Dorsolateral prefrontal cortex (tissue), 120 donors: ENCODE measurements at regions of chr21 and their contacts with region 1.

Region 1: DNA sequence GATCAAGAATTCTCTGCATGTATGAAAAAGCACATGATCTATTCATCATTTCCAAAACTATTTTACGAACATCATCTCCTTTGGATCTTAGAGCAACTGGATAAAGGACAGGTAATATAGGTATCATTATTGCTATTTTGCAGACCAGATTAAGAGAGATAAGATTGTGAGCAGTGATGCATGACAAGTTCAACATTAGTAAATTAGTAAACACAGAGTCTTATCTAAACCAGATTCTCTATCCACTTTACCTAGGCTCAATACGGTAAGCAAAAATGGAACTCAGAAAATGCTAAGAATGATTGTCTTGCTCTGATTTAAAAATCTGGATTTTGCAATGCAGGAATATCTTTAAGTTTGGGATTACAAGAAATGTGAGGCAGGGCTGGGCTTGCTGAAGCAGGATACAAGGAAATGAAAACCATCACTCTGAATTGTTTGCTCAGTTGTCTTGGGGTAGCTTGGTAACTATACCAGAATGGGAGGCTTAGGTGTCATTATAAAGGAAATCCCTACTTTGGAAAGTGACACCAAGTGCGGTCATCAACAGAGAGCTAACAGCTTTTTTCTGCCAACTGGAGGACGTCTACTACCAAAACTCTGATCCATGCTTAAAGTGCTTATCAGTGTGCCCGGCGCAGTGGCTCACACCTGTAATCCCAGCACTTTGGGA is 332.7 kb upstream of the RUNX1 start:
- DNase-seq: no peak
- H3K4me3 ChIP-seq: no peak overlapping the region
- H3K27ac ChIP-seq: no peak overlapping the region
- H3K27me3 ChIP-seq: peaks cover 0 to 5% (median 0%) of the 10 kb centered on the region in 45 donors
- CTCF ChIP-seq: no peak

Region 2: DNA sequence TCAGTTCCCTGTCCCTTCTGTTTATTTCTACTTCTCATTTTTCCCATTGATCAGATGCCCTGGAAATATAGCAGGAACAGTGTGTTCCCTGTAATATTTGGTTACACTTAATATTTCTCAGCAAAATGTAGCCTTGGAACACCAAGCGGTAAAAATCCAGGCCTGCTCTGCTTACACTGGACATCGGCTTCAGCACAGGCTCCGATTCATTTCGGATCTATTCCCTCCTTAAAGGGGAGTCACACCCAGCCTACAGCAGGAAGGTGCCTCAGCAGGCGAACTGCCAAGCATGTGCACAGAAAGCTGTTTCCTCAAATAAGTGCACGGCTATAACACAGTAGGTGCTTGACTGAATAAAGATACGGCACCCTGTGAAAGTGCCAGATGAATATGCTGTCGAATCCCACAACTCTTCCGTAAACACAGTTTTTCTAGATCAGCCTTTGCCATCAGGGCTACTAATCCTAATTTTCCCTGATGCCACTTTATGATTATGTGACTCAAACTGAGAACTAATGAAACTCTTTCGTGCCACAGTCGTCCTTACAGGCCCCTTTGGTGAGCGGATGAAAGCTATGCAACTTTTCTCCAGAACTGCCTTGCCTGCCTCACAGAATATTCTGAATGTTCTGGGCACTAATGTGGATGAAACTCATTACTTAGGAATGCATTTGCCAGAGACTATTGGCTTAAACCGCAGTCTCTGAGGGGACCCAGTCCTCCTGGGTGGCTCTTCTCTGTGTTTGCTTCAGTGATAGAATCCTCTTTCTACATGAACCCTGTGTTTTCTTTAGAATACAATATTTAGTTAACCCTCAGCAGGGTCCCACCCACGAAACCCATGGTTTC is 57.2 kb before region 1 on chr21:
- intact Hi-C with region 1: loop called in 1 of 2 experiments (anchors 10 kb)
- DNase-seq: no peak
- H3K4me3 ChIP-seq: no peak overlapping the region
- H3K27ac ChIP-seq: peak overlapping the region in 1 of 59 donors; percentile 48
- H3K27me3 ChIP-seq: peaks cover 0 to 16% (median 0%) of the 10 kb centered on the region in 45 donors
- CTCF ChIP-seq: no peak